Right ventricle myocardium superior (tissue), 1 donor: ENCODE measurements at regions of chr12 and their contacts with region 1.

Region 1: DNA sequence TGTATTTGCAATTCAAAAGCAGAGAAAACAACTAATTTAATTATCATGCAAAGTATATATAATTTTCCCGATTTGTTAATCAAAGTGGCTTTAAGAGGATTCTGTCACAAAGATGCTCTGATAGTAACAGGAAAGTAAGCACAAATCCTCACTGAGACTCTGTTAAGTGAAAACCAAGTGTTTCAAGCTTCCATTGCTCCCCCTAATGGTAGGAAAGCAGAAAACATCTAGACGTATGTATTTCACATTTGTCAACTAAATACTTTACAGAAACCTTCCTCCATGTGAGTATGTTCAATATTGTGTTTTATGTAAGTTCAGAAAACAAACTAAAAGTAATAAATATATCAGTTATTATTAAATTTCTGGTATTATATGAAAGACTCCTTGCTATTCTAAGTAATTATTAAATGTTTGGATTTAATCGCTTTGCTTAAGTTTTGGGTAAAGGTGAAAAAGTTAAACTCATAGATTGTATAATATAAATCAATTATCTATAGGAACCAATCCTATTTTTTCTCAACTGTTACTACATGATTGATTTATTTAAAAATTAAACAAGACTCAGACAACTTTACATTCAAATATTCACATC is 1.5 kb upstream of the NTS start:
- DNase-seq: no peak
- ATAC-seq: no peak

Region 2: DNA sequence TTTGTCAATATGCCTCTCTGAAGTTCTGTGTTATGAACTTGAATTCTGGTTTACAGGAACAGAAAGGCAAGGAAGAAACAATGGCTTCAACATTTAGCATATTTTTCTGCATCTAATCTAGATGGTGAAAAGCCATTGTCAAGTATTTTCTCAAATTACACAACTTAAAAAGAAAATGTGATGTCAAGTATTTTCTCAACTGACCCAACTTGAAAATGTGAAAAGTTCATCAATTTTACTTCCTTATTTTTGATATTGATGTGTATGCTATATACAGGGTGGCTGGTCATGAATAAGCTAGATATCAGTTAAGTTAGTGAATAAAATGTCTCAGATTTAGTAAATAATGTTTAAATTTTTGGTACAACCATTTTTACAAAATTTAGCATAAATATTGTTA is 395.8 kb before region 1 on chr12:
- intact Hi-C with region 1: loop called (anchors 5 kb)
- DNase-seq: no peak
- ATAC-seq: no peak

Region 3: DNA sequence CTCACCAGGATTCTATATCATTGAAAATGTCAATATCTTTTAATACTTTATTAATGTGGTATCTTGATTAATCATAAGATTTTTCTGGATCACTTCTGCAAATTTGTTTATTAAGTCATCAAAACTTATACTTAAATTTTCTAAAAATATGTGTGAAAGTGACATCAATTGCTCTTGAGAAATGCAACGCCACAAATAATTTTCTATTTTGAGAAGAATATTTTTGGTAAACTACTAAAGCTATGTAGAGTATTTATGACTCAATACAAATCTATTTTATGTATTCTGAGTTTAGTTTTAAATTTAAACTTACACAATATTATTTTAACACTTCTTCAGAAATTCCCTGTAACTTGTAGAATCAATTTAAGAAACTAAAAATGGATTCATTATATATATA is 299.6 kb before region 1 on chr12:
- intact Hi-C with region 1: loop called (anchors 2 kb)
- DNase-seq: no peak
- ATAC-seq: no peak